Naive thymus-derived CD8-positive, alpha-beta T cell (primary cell): ENCODE measurements at regions of chr15 and their contacts with region 1.

Region 1: GRCh38 chr15:63600616-63601025 is 3.4 kb downstream of the FBXL22 start:
- DNase-seq: peak; percentile 86 to 95 (median 89)
- ATAC-seq: peak; percentile 76 to 78
- H3K4me3 Mint-ChIP-seq: peak overlapping the region; percentile 88 to 98 (median 94)
- H3K27ac Mint-ChIP-seq: peak overlapping the region; percentile 85 to 99 (median 96)
- H3K4me1 Mint-ChIP-seq: peaks cover 28 to 70% (median 67%) of the 10 kb centered on the region in 4 donors
- H3K27me3 Mint-ChIP-seq: no peaks in the 10 kb centered on the region

Region 2: GRCh38 chr15:63466378-63467192 is 134.0 kb before region 1 on chr15:
- POLR2A ChIA-PET with region 1: interaction called, 14 read pairs
- DNase-seq: peak in 9 of 10 donors; percentile 39 to 83 (median 72)
- ATAC-seq: peak; percentile 95 to 97
- H3K4me3 Mint-ChIP-seq: peak overlapping the region in 1 of 10 donors; percentile 19
- H3K27ac Mint-ChIP-seq: peak overlapping the region; percentile 51 to 93 (median 85)
- H3K4me1 Mint-ChIP-seq: peaks cover 7 to 31% (median 20%) of the 10 kb centered on the region in 4 donors
- H3K27me3 Mint-ChIP-seq: no peaks in the 10 kb centered on the region

Region 3: GRCh38 chr15:63481105-63481810 is 119.4 kb before region 1 on chr15:
- POLR2A ChIA-PET with region 1: interaction called, 21 read pairs
- DNase-seq: no peak
- ATAC-seq: no peak
- H3K4me3 Mint-ChIP-seq: peak overlapping the region in 9 of 10 donors; percentile 22 to 92 (median 78)
- H3K27ac Mint-ChIP-seq: peak overlapping the region; percentile 98 to 100 (median 100)
- H3K4me1 Mint-ChIP-seq: peaks cover 22 to 90% (median 78%) of the 10 kb centered on the region in 4 donors
- H3K27me3 Mint-ChIP-seq: no peaks in the 10 kb centered on the region